GM12878 (cell line): ENCODE measurements at regions of chr10 and their contacts with region 1.

Region 1: GRCh38 chr10:35336084-35336831 is at the start of gene CCNY:
- DNase-seq: no peak
- ATAC-seq: peak; percentile 80
- H3K4me3 ChIP-seq: peak within 1 kb of the TSS; percentile 75
- H3K27ac ChIP-seq: peak within 1 kb of the TSS; percentile 51
- H3K4me1 ChIP-seq: peaks cover 15% of the 10 kb centered on the region
- H3K27me3 ChIP-seq: no peaks in the 10 kb centered on the region
- CTCF ChIP-seq: no peak
- EP300 ChIP-seq: 0 out of 4 replicates have a peak, but pooled peaks of 1 of the 2 experiments have one; percentile 6
- POLR2A ChIP-seq: peak; percentile 88
- RAD21 ChIP-seq: no peak
- polyA plus RNA-seq, gene CCNY: 6.5 to 7.7 TPM

Region 2: DNA sequence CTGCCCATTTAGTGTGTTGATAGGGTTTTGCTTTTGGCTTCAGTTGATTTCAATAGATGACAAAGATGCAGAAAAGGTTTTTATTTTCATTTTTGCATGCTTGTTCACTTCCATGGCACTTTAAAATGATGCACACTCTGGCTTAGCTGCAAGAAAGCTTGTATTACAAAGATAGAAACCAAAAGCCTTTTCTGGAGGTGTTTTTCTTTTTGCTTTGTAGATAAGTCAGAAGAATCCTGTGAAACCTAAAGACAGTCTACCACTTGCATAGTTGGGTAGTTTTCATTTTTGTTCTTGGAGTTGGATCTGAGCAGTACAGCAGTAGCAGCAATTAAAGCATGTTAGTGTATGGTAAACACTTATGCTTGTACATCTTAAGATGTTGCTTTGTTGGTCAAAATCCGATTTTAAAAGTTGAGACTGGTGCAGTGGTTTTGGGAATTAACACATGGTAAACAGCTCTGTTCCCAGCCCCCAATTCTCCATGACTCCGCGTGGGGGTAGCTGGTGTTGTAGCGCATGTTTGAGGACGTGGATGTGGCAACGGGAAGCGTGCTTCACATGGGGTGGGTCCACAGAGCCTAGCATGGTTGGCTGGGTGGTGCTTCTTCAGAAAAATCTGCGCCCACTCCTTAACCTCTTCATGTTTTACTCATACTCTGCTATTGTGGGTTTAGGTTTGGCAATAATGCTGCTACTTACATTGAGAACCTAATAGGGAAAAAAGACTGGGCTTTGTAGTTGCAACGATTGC is 19.9 kb after region 1 on chr10:
- CTCF ChIA-PET with region 1: interaction called, 7 read pairs
- POLR2A ChIA-PET with region 1: interaction called, 22 read pairs
- RAD21 ChIA-PET with region 1: interaction called, 9 read pairs
- SMC1A ChIA-PET with region 1: interaction called, 58 read pairs
- in situ Hi-C with region 1: no loop called
- intact Hi-C with region 1: loop called (anchors 2 kb)
- DNase-seq: peak; percentile 53
- ATAC-seq: peak; percentile 60
- H3K4me3 ChIP-seq: peak overlapping the region; percentile 8; the same call in 1 of the 2 replicates
- H3K27ac ChIP-seq: 0 out of 2 replicates have a peak overlapping the region, but pooled peaks have one; percentile 22
- H3K4me1 ChIP-seq: peaks cover 33% of the 10 kb centered on the region
- H3K27me3 ChIP-seq: no peaks in the 10 kb centered on the region
- CTCF ChIP-seq: no peak
- EP300 ChIP-seq: no peak
- POLR2A ChIP-seq: no peak
- RAD21 ChIP-seq: 0 out of 2 replicates have a peak, but pooled peaks have one; percentile 4